HepG2 (cell line): ENCODE measurements at regions of chr11 and their contacts with region 1.

Region 1: GRCh38 chr11:129230006-129230405 is 37.9 kb upstream of the ARHGAP32 start:
- DNase-seq: no peak
- ATAC-seq: no peak
- H3K4me3 ChIP-seq: no peak overlapping the region
- H3K27ac ChIP-seq: no peak overlapping the region
- H3K4me1 ChIP-seq: peaks cover 5% of the 10 kb centered on the region
- H3K27me3 ChIP-seq: no peaks in the 10 kb centered on the region
- CTCF ChIP-seq: peak; percentile 34; the same call in 1 of the 2 replicates
- EP300 ChIP-seq: no peak
- POLR2A ChIP-seq: no peak
- RAD21 ChIP-seq: no peak; the same call in 1 of the 2 replicates

Region 2: DNA sequence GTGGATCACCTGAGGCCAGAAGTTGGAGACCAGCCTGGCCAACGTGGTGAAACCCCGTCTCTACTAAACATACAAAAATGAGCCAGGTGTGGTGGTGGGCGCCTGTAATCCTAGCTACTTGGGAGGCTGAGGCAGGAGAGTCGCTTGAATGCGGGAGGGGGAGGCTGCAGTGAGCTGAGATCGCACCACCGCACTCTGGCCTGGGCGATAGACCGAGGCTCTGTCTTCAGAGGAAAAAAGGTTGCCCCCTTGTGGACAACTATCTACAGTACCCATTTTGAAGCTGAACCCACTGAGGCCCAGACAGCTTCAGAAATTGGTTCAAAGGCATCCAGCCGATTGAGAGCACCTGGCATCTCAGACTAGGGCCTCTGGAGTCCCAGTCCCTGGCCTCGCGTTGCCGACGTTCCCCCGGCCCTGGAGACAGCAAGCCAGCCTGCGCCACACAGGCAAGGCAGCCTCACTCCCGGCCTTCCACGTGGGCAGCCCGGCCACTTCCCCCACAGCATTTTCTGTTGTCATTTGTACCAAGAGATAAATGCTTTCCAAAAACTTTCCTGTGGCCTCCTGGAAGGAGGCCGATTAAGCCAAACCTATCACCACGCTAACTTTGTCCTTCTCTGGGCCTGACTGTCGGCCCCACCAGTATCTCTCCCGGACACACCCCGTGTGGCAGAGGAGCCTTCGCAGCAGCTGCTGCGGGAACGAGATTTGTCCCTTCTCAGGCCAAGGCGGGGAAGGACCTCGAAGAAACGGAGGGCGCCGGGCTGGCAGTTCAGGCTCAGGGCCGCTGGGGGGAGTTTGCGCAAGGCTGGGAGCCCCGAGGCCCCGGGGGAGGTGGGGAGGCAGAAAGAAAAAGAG is 453.4 kb before region 1 on chr11:
- CTCF ChIA-PET with region 1: no interaction called
- POLR2A ChIA-PET with region 1: no interaction called
- in situ Hi-C with region 1: no loop called
- intact Hi-C with region 1: no loop called
- DNase-seq: no peak
- ATAC-seq: peak; percentile 89
- H3K4me3 ChIP-seq: no peak overlapping the region
- H3K27ac ChIP-seq: no peak overlapping the region
- H3K4me1 ChIP-seq: no peaks in the 10 kb centered on the region
- H3K27me3 ChIP-seq: peaks cover 2 to 38% of the 10 kb centered on the region in 2 experiments; a peak in 4 of 5 replicates
- CTCF ChIP-seq: peak; percentile 43
- EP300 ChIP-seq: no peak
- POLR2A ChIP-seq: no peak
- RAD21 ChIP-seq: no peak

Region 3: GRCh38 chr11:129247129-129247528 is 17.1 kb after region 1 on chr11:
- CTCF ChIA-PET with region 1: no interaction called
- POLR2A ChIA-PET with region 1: no interaction called
- in situ Hi-C with region 1: no loop called
- intact Hi-C with region 1: no loop called
- DNase-seq: no peak
- ATAC-seq: no peak
- H3K4me3 ChIP-seq: no peak overlapping the region
- H3K27ac ChIP-seq: no peak overlapping the region
- H3K4me1 ChIP-seq: peaks cover 32% of the 10 kb centered on the region
- H3K27me3 ChIP-seq: no peaks in the 10 kb centered on the region
- CTCF ChIP-seq: no peak
- EP300 ChIP-seq: no peak
- POLR2A ChIP-seq: no peak
- RAD21 ChIP-seq: no peak

Region 4: GRCh38 chr11:129331871-129332274 is 101.9 kb after region 1 on chr11:
- CTCF ChIA-PET with region 1: interaction called, 18 read pairs
- POLR2A ChIA-PET with region 1: no interaction called
- in situ Hi-C with region 1: loop called (anchors 5 kb)
- intact Hi-C with region 1: loop called (anchors 1 kb)
- DNase-seq: peak; percentile 73
- ATAC-seq: peak; percentile 96
- H3K4me3 ChIP-seq: peak overlapping the region in 1 of 3 experiments; percentile 32; a peak in 2 of 6 replicates
- H3K27ac ChIP-seq: no peak overlapping the region
- H3K4me1 ChIP-seq: peaks cover 14% of the 10 kb centered on the region
- H3K27me3 ChIP-seq: no peaks in the 10 kb centered on the region; a peak in 1 of 5 replicates
- CTCF ChIP-seq: peak; percentile 96
- EP300 ChIP-seq: no peak
- POLR2A ChIP-seq: no peak
- RAD21 ChIP-seq: peak; percentile 95